SK-N-SH (cell line): ENCODE measurements at regions of chr5 and their contacts with region 1.

Region 1: GRCh38 chr5:132180134-132180745 is 47.4 kb downstream of the P4HA2 start:
- DNase-seq: peak; percentile 69
- H3K4me3 ChIP-seq: peak overlapping the region in 1 of 2 experiments; percentile 14; a peak in 1 of 4 replicates
- H3K27ac ChIP-seq: no peak overlapping the region
- H3K4me1 ChIP-seq: no peaks in the 10 kb centered on the region
- H3K27me3 ChIP-seq: no peaks in the 10 kb centered on the region
- CTCF ChIP-seq: peak; percentile 76
- EP300 ChIP-seq: no peak
- RAD21 ChIP-seq: peak; percentile 74

Region 2: GRCh38 chr5:130578354-130578753 is 1601.9 kb before region 1 on chr5:
- CTCF ChIA-PET with region 1: no interaction called
- POLR2A ChIA-PET with region 1: no interaction called
- DNase-seq: no peak
- H3K4me3 ChIP-seq: no peak overlapping the region
- H3K27ac ChIP-seq: no peak overlapping the region
- H3K4me1 ChIP-seq: no peaks in the 10 kb centered on the region
- H3K27me3 ChIP-seq: peaks cover 12% of the 10 kb centered on the region; the same call in 1 of the 2 replicates
- CTCF ChIP-seq: no peak
- EP300 ChIP-seq: no peak
- RAD21 ChIP-seq: no peak

Region 3: DNA sequence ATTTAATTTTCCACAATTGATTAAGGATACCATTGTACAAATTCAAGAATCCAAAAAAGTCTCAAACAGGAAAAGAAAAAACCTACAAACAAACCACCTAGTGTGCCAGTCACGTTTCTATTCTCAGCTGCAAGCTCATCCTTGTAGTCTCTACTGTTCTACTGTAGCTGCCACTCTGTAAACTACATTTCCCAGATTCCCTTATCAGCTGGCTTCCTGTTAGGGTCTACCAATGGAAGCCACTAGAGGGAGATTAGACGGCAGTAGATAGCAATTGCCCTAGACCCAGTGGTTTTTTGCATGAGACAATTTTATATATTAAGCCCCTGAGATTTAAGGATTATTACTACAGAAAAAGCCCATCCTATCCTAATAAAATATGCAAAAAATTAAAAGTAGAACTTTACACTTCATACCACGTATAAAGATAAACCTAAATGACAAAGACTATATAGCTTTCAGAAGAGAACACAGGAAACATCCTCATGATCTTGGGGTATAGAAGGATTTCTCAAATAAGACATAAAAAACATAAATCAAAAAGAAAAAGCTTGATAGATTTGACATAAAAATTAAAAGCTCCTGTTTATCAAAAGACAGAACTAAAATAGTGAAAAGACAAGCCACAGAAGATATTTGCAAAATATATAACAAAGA is 10.0 kb after region 1 on chr5:
- CTCF ChIA-PET with region 1: interaction called, 29 read pairs
- POLR2A ChIA-PET with region 1: interaction called, 3 read pairs
- DNase-seq: peak; percentile 87
- H3K4me3 ChIP-seq: peak overlapping the region in 1 of 2 experiments; percentile 12; a peak in 2 of 4 replicates
- H3K27ac ChIP-seq: no peak overlapping the region; a peak in 1 of 4 replicates
- H3K4me1 ChIP-seq: no peaks in the 10 kb centered on the region; a peak in 1 of 4 replicates
- H3K27me3 ChIP-seq: no peaks in the 10 kb centered on the region
- CTCF ChIP-seq: peak; percentile 87
- EP300 ChIP-seq: no peak
- RAD21 ChIP-seq: peak; percentile 68

Region 4: DNA sequence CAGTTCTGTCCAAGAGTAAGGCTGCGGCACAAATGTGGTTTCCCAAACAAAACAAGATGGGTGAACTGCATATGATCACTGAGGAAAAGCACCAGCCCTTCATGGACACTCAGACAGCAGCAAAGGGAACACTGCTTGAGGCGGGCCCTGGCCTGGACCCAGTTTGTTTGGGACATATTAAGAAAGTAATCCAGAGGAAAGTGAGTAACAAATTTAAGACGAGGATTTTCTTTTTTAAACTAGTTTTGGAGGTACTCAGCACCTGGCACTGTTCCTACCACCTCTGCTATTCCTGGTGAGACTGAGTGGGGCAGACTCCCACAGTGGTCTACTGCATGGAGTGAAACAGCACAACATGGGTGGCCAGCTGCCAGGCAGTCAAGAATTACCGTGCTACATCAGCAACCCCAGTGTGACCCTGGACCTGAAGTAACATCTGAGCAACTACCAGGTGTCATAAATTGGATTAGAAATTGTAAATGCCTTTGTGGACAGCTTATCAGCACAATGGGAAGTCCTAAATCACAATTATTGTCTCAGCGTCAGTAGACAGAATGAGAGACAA is 19.0 kb after region 1 on chr5:
- CTCF ChIA-PET with region 1: interaction called, 13 read pairs
- POLR2A ChIA-PET with region 1: no interaction called
- DNase-seq: no peak
- H3K4me3 ChIP-seq: no peak overlapping the region
- H3K27ac ChIP-seq: no peak overlapping the region
- H3K4me1 ChIP-seq: peaks cover 0 to 4% of the 10 kb centered on the region in 2 experiments; a peak in 1 of 4 replicates
- H3K27me3 ChIP-seq: no peaks in the 10 kb centered on the region
- CTCF ChIP-seq: no peak
- EP300 ChIP-seq: no peak
- RAD21 ChIP-seq: no peak

Region 5: DNA sequence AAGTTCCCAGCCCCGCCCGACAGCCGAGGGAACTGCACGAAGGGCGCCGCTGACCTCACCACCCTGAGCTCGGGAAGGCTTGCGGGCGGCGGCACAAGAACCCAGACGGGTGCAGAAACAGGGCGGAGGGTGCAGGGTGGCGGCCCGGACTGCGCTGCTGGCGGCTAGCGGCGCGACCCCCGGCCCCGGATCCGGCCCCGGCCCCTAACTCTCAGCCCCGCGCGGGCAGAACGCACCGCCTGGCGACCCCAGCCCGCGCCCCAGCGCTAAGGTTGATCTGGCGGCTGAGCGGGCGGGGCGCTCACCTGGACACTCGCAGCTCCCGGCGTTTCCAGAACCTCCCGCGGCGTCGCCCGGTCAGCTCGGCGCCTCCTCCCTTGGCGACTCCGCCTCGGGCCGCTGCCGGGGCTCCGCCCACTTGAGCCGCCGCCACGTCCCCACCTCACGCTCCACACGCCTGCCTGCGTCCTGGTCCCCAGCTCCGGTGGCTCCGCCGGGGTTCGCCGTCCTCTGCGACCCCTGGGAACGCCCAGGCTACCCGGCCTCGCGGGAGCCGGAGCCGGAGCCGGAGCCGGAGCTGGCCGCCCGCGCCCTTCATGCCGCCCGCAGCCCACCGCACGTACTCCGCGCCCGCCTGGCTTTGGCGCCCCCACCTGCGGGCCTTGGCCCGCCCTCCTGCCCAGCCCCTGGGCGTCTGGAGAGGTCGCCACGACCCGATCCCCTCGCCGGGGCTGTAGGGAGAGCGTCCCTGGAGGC is 47.4 kb after region 1 on chr5 and contains the start of gene P4HA2:
- CTCF ChIA-PET with region 1: interaction called, 10 read pairs
- POLR2A ChIA-PET with region 1: no interaction called
- DNase-seq: peak; percentile 95
- H3K4me3 ChIP-seq: peak within 1 kb of the TSS; percentile 68 to 83
- H3K27ac ChIP-seq: peak within 1 kb of the TSS; percentile 45 to 67; a peak in 2 of 4 replicates
- H3K4me1 ChIP-seq: peaks cover 28 to 32% of the 10 kb centered on the region in 2 experiments; a peak in 3 of 4 replicates
- H3K27me3 ChIP-seq: no peaks in the 10 kb centered on the region
- CTCF ChIP-seq: no peak; the same call in 1 of the 2 replicates
- EP300 ChIP-seq: no peak
- RAD21 ChIP-seq: no peak
- polyA plus RNA-seq, gene P4HA2: 67.2 and 73.5 TPM in 2 replicates